GM12878 (cell line): ENCODE measurements at regions of chr4 and their contacts with region 1.

Region 1: GRCh38 chr4:3106339-3107186 is 32.1 kb downstream of the HTT start:
- DNase-seq: peak; percentile 79
- ATAC-seq: peak; percentile 100
- H3K4me3 ChIP-seq: no peak overlapping the region
- H3K27ac ChIP-seq: peak overlapping the region; percentile 22; the same call in 1 of the 2 replicates
- H3K4me1 ChIP-seq: peaks cover 5% of the 10 kb centered on the region
- H3K27me3 ChIP-seq: no peaks in the 10 kb centered on the region
- CTCF ChIP-seq: peak; percentile 98 to 99 (median 98); a peak in 5 of 6 replicates
- EP300 ChIP-seq: peak in 1 of 2 experiments; percentile 12; a peak in 1 of 4 replicates
- POLR2A ChIP-seq: no peak
- RAD21 ChIP-seq: peak; percentile 81

Region 2: GRCh38 chr4:3047464-3048286 is 58.9 kb before region 1 on chr4:
- CTCF ChIA-PET with region 1: interaction called, 14 read pairs
- POLR2A ChIA-PET with region 1: no interaction called
- RAD21 ChIA-PET with region 1: interaction called, 4 read pairs
- SMC1A ChIA-PET with region 1: interaction called, 9 read pairs
- in situ Hi-C with region 1: no loop called
- intact Hi-C with region 1: loop called (anchors 1 kb)
- DNase-seq: peak; percentile 99
- ATAC-seq: peak; percentile 95
- H3K4me3 ChIP-seq: no peak overlapping the region
- H3K27ac ChIP-seq: peak overlapping the region; percentile 86
- H3K4me1 ChIP-seq: peaks cover 38% of the 10 kb centered on the region
- H3K27me3 ChIP-seq: no peaks in the 10 kb centered on the region
- CTCF ChIP-seq: peak; percentile 68 to 81 (median 72)
- EP300 ChIP-seq: peak in 1 of 2 experiments; percentile 71; a peak in 3 of 4 replicates
- POLR2A ChIP-seq: peak; percentile 51; the same call in 1 of the 2 replicates
- RAD21 ChIP-seq: peak; percentile 93

Region 3: GRCh38 chr4:3079694-3080123 is 26.9 kb before region 1 on chr4:
- CTCF ChIA-PET with region 1: interaction called, 7 read pairs
- POLR2A ChIA-PET with region 1: interaction called, 4 read pairs
- RAD21 ChIA-PET with region 1: interaction called, 4 read pairs
- SMC1A ChIA-PET with region 1: interaction called, 5 read pairs
- in situ Hi-C with region 1: no loop called
- intact Hi-C with region 1: loop called (anchors 1 kb)
- DNase-seq: peak; percentile 54
- ATAC-seq: peak; percentile 55
- H3K4me3 ChIP-seq: peak overlapping the region; percentile 63
- H3K27ac ChIP-seq: peak overlapping the region; percentile 94
- H3K4me1 ChIP-seq: peaks cover 36% of the 10 kb centered on the region
- H3K27me3 ChIP-seq: no peaks in the 10 kb centered on the region
- CTCF ChIP-seq: no peak
- EP300 ChIP-seq: no peak
- POLR2A ChIP-seq: peak; percentile 43; the same call in 1 of the 2 replicates
- RAD21 ChIP-seq: no peak

Region 4: DNA sequence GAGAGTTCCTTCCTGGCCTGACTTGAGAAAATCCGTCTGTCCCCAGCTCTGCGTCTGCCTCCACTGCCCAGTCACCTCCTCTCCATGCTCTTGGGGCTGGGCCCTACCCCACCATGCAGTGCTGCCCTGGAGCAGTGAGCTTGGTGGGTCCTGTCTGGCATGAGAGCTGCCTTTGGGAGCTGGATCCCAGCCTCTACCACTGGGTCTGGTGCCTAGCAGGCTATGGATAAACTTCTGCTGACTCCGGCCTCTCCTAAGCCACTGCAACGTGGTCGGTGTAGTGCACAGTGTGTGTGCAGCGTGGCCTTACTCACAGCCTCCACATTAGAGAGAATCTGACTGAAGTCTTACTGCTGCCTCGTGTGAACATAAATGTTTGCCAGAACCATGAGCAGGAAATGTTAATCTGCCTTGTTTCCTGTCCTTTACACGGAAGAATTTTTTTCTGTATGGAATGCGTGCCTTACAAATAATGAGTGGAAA is 15.6 kb after region 1 on chr4:
- CTCF ChIA-PET with region 1: interaction called, 9 read pairs
- POLR2A ChIA-PET with region 1: no interaction called
- RAD21 ChIA-PET with region 1: no interaction called
- SMC1A ChIA-PET with region 1: interaction called, 14 read pairs
- in situ Hi-C with region 1: no loop called
- intact Hi-C with region 1: no loop called
- DNase-seq: no peak
- ATAC-seq: no peak
- H3K4me3 ChIP-seq: no peak overlapping the region
- H3K27ac ChIP-seq: no peak overlapping the region
- H3K4me1 ChIP-seq: no peaks in the 10 kb centered on the region
- H3K27me3 ChIP-seq: no peaks in the 10 kb centered on the region
- CTCF ChIP-seq: no peak
- EP300 ChIP-seq: no peak
- POLR2A ChIP-seq: peak; percentile 30; the same call in 1 of the 2 replicates
- RAD21 ChIP-seq: no peak

Region 5: DNA sequence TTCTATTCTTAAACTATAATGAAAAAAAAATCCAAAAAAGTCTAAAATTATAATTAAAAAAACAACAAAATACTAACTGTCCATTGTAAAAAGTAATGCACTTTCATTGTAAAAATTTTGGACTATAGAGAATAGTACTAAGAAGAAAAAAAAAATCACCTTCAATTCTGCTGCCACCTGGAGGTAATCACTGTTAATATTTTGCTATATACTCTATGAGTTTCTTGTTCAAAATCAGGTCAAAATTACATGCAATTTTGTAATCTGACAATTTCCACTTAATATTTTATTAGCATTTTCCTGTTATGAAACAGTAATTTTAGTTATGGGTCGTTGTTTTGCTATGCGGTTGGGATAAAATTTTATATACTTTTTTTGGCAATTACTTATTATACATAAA is 29.9 kb after region 1 on chr4:
- CTCF ChIA-PET with region 1: interaction called, 7 read pairs
- POLR2A ChIA-PET with region 1: no interaction called
- RAD21 ChIA-PET with region 1: interaction called, 4 read pairs
- SMC1A ChIA-PET with region 1: interaction called, 12 read pairs
- in situ Hi-C with region 1: no loop called
- intact Hi-C with region 1: no loop called
- DNase-seq: no peak
- ATAC-seq: no peak
- H3K4me3 ChIP-seq: no peak overlapping the region
- H3K27ac ChIP-seq: no peak overlapping the region
- H3K4me1 ChIP-seq: no peaks in the 10 kb centered on the region
- H3K27me3 ChIP-seq: no peaks in the 10 kb centered on the region
- CTCF ChIP-seq: peak in 1 of 3 experiments; percentile 19; a peak in 2 of 6 replicates
- EP300 ChIP-seq: no peak
- POLR2A ChIP-seq: no peak
- RAD21 ChIP-seq: no peak

Region 6: GRCh38 chr4:3366893-3367775 is 260.6 kb after region 1 on chr4:
- CTCF ChIA-PET with region 1: no interaction called
- POLR2A ChIA-PET with region 1: no interaction called
- RAD21 ChIA-PET with region 1: no interaction called
- SMC1A ChIA-PET with region 1: no interaction called
- in situ Hi-C with region 1: no loop called
- intact Hi-C with region 1: no loop called
- DNase-seq: no peak
- ATAC-seq: no peak
- H3K4me3 ChIP-seq: no peak overlapping the region
- H3K27ac ChIP-seq: no peak overlapping the region
- H3K4me1 ChIP-seq: peaks cover 10% of the 10 kb centered on the region
- H3K27me3 ChIP-seq: peaks cover 0 to 2% of the 10 kb centered on the region in 2 experiments; a peak in 1 of 4 replicates
- CTCF ChIP-seq: no peak
- EP300 ChIP-seq: no peak
- POLR2A ChIP-seq: no peak
- RAD21 ChIP-seq: no peak

Region 7: DNA sequence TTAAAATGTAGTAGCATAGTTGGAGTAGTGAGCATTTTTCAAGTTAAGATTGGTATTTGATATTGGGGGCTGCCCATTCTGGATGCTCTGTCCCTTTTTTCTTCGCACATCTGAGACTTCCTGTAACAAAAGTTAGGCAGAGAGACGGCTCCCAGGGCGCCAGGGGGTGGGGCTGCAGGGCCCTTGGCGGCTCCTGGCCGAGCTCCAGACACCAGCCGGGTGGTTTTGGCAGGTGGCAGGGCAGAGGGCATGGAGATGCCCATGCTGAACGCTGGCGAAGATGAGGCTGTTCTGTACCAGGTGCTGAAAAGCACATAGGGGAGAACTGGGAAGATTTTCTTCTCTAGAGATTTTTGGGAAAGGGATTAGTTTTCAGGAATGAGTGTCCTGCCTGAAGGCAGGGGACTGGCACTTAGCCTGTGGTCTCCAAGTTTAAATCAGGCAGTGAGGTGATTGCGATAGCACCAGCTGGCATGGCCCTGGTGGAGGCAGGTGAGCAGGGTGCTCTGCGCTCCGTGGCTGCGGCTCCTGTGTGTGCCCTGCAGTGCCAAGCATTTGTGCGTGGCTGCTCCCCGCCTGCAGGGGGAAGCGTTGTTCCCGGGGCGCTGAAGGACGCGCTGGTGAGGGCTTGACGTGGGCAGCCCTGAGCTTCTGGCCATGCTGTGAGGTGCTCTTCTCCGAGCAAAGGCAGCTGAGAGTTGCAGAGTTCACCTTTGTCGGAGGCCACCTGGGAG is 311.6 kb after region 1 on chr4:
- CTCF ChIA-PET with region 1: no interaction called
- POLR2A ChIA-PET with region 1: no interaction called
- RAD21 ChIA-PET with region 1: no interaction called
- SMC1A ChIA-PET with region 1: no interaction called
- in situ Hi-C with region 1: no loop called
- intact Hi-C with region 1: no loop called
- DNase-seq: no peak
- ATAC-seq: peak; percentile 28; the same call in 1 of the 3 replicates
- H3K4me3 ChIP-seq: no peak overlapping the region
- H3K27ac ChIP-seq: no peak overlapping the region
- H3K4me1 ChIP-seq: no peaks in the 10 kb centered on the region; the same call in 1 of the 2 replicates
- H3K27me3 ChIP-seq: no peaks in the 10 kb centered on the region; a peak in 1 of 4 replicates
- CTCF ChIP-seq: no peak
- EP300 ChIP-seq: no peak
- POLR2A ChIP-seq: no peak
- RAD21 ChIP-seq: no peak

Region 8: GRCh38 chr4:3442959-3443749 is 336.6 kb after region 1 on chr4:
- CTCF ChIA-PET with region 1: interaction called, 3 read pairs
- POLR2A ChIA-PET with region 1: no interaction called
- RAD21 ChIA-PET with region 1: no interaction called
- SMC1A ChIA-PET with region 1: no interaction called
- in situ Hi-C with region 1: loop called (anchors 10 kb)
- intact Hi-C with region 1: loop called (anchors 2 kb)
- DNase-seq: no peak
- ATAC-seq: peak; percentile 95
- H3K4me3 ChIP-seq: no peak overlapping the region
- H3K27ac ChIP-seq: no peak overlapping the region
- H3K4me1 ChIP-seq: no peaks in the 10 kb centered on the region
- H3K27me3 ChIP-seq: no peaks in the 10 kb centered on the region
- CTCF ChIP-seq: peak; percentile 96 to 99 (median 98); a peak in 5 of 6 replicates
- EP300 ChIP-seq: no peak
- POLR2A ChIP-seq: no peak
- RAD21 ChIP-seq: peak; percentile 90